ENCODE measurements at regions of chr5 and their contacts with region 1.

Region 1: DNA sequence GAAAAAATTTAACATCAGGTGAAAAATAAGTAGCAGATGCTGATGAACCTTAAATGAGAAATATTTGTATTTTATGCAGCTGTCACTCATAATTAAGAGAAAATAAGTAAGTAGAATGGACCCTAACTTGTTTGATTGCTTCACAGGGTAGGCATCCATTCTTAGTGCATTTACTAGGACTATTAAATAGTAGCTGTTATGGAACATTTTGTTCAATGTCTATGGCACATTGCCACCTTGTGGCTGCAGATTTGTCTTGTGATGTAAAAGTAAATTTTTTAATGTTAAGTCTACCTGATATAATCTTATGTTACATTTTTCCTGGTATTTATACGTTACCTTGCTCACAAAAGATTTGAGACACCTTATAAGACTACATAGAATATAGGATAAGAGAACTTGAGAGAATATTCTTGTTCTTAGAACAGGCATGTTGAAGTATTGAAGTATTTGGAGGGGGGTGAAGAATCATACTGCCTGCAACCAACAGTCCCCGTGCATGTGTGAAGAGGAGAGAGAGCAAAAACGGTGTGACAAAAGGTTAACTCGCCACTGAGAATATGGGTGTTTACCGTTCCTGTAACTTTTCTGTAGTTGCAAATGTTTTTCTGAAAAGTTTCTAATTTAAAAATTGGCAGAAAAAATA is 161.1 kb downstream of the MAST4 start:
- DNase-seq: peak in 1 of 2 donors; percentile 42
- H3K4me3 ChIP-seq: no peak overlapping the region
- H3K27ac ChIP-seq: no peak overlapping the region
- H3K4me1 ChIP-seq: peaks cover 0 to 7% (median 0%) of the 10 kb centered on the region in 4 donors
- H3K27me3 ChIP-seq: no peaks in the 10 kb centered on the region
- CTCF ChIP-seq: peak; percentile 47 to 53

Region 2: GRCh38 chr5:64971513-64971912 is 1785.8 kb before region 1 on chr5:
- intact Hi-C with region 1: no loop called
- DNase-seq: no peak
- H3K4me3 ChIP-seq: no peak overlapping the region
- H3K27ac ChIP-seq: no peak overlapping the region
- H3K4me1 ChIP-seq: peaks cover 0 to 13% (median 3%) of the 10 kb centered on the region in 4 donors
- H3K27me3 ChIP-seq: no peaks in the 10 kb centered on the region
- CTCF ChIP-seq: no peak

Region 3: GRCh38 chr5:66306105-66306843 is 451.0 kb before region 1 on chr5:
- intact Hi-C with region 1: loop called (anchors 5 kb)
- DNase-seq: peak in 1 of 2 donors; percentile 52
- H3K4me3 ChIP-seq: no peak overlapping the region
- H3K27ac ChIP-seq: no peak overlapping the region
- H3K4me1 ChIP-seq: peaks cover 0 to 2% (median 0%) of the 10 kb centered on the region in 4 donors
- H3K27me3 ChIP-seq: peaks cover 0 to 12% of the 10 kb centered on the region in 2 donors
- CTCF ChIP-seq: peak; percentile 66 to 72

Region 4: GRCh38 chr5:66713998-66714397 is 43.3 kb before region 1 on chr5:
- intact Hi-C with region 1: no loop called
- DNase-seq: no peak
- H3K4me3 ChIP-seq: no peak overlapping the region
- H3K27ac ChIP-seq: no peak overlapping the region
- H3K4me1 ChIP-seq: peaks cover 0 to 8% (median 4%) of the 10 kb centered on the region in 4 donors
- H3K27me3 ChIP-seq: no peaks in the 10 kb centered on the region
- CTCF ChIP-seq: no peak